Activated naive CD4-positive, alpha-beta T cell treated with anti-CD3 and anti-CD28 coated beads for 36 hours (primary cell): ENCODE measurements at regions of chr12 and their contacts with region 1.

Region 1: DNA sequence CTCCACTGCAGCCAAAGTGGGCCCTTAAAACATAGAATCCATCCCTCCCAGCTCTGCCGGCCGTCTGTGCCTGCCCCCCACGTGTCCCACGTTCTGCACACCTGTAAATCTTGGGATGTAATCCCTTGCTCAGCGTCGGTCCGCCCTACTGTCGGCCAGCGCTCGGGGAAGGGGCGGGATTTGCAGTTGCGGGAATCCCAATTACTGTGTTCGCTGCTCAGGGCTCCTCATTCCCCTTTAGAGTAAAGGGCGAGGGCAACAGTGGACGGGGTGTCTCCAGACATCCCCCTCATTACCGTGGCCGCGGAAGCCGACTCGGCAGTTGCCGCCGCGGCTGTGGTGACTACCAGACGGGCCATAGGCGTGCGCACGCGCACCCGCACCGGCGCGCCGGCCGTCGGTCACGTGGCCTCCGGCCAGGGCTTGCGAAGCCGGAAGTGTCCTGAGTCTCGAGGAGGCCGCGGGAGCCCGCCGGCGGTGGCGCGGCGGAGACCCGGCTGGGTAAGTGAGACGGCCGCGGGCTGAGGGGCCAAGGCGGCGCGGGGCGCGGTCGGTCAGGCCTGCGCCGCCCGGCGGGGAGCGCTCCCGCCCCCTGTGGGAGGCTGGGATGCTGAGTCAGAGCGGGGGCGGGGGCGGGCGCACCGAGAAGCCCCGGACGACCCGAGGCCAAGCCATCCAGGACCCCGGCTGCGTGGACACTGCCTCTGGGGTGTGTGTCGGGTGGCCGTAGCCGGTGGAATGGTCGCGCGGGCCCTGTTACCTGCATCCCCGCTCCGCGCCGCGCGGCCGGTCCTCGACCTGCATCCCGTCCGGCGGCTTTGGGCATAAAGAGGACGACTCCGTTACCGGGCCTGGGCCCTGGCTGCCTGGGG is at the start of gene TBK1:
- DNase-seq: peak; percentile 45
- H3K4me3 Mint-ChIP-seq: peak within 1 kb of the TSS; percentile 94
- H3K27ac Mint-ChIP-seq: peak within 1 kb of the TSS; percentile 94
- H3K4me1 Mint-ChIP-seq: peaks cover 41% of the 10 kb centered on the region
- H3K27me3 Mint-ChIP-seq: no peaks in the 10 kb centered on the region
- total RNA-seq, gene TBK1: 10.7 to 12.1 TPM

Region 2: DNA sequence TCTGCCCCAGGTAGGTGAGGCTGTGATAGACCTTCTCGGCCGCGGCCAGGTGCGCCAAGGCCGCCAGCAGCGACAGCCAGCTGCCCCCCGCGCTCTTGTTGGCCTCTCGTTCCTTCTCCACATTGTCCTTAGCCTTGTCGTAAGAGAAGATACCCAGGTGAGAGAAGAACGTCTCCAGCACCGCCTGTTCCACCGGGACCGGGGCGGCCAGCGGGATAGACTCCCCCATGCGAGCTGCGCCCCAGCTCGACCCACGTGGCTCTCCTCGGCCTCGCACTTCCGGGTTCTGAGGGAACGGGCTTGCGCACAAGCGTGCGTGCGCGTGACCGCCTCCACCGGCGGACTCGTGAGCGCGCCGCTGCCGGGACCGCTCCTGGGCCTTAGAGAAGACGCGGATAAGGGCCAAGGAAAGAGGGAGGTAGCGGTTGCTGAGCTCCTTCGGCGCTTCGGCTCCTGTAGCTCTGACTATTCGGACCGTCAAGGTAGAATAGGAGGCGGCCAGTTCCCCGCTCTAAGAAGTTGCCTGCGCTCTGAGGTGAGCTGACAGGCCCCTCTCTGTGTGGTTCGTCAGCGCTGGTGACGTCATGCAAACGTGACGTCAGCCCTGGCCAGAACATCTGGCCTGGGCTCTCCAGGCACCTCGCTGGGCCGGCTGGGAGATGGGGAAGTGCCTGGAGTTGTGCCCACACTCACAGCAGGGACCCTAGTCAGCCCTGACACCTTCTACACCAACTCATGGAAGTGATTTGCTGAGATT is 229.7 kb before region 1 on chr12 and contains the start of gene KICS2:
- CTCF ChIA-PET with region 1: no interaction called
- intact Hi-C with region 1: loop called (anchors 2 kb)
- DNase-seq: peak; percentile 92
- H3K4me3 Mint-ChIP-seq: peak within 1 kb of the TSS; percentile 92
- H3K27ac Mint-ChIP-seq: peak within 1 kb of the TSS; percentile 91
- H3K4me1 Mint-ChIP-seq: peaks cover 26% of the 10 kb centered on the region
- H3K27me3 Mint-ChIP-seq: no peaks in the 10 kb centered on the region
- total RNA-seq, gene KICS2: 13.3 to 15.6 TPM